ENCODE measurements at regions of chr6 and their contacts with region 1.

Region 1: DNA sequence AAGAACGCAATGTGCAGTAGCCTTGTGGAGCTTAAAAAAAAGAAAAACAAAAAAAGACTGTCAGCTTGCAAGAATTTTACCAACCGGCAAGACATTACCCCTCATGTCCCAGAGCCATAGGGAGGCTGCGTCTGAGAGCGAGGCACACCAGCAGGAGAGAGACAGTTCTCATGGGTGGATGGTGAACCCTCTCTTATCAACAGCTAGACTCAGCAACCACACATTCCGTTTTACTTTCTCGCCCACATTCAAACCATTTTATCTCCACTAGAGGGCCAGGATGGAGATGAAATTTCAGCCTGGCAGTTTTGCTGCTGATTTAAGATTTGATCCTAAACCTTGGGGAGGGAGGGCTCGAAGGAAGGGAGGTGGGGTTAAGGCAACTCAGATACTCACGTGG is 247.0 kb downstream of the ATXN1 start:
- DNase-seq: no peak
- H3K4me3 ChIP-seq: no peak overlapping the region
- H3K27ac ChIP-seq: no peak overlapping the region
- H3K4me1 ChIP-seq: peaks cover 3% of the 10 kb centered on the region
- H3K27me3 ChIP-seq: no peaks in the 10 kb centered on the region
- CTCF ChIP-seq: peak; percentile 18

Region 2: GRCh38 chr6:16319813-16320532 is 194.3 kb before region 1 on chr6:
- intact Hi-C with region 1: loop called (anchors 10 kb)
- DNase-seq: peak; percentile 40
- H3K4me3 ChIP-seq: no peak overlapping the region
- H3K27ac ChIP-seq: peak overlapping the region; percentile 66
- H3K4me1 ChIP-seq: peaks cover 4% of the 10 kb centered on the region
- H3K27me3 ChIP-seq: no peaks in the 10 kb centered on the region
- CTCF ChIP-seq: no peak

Region 3: DNA sequence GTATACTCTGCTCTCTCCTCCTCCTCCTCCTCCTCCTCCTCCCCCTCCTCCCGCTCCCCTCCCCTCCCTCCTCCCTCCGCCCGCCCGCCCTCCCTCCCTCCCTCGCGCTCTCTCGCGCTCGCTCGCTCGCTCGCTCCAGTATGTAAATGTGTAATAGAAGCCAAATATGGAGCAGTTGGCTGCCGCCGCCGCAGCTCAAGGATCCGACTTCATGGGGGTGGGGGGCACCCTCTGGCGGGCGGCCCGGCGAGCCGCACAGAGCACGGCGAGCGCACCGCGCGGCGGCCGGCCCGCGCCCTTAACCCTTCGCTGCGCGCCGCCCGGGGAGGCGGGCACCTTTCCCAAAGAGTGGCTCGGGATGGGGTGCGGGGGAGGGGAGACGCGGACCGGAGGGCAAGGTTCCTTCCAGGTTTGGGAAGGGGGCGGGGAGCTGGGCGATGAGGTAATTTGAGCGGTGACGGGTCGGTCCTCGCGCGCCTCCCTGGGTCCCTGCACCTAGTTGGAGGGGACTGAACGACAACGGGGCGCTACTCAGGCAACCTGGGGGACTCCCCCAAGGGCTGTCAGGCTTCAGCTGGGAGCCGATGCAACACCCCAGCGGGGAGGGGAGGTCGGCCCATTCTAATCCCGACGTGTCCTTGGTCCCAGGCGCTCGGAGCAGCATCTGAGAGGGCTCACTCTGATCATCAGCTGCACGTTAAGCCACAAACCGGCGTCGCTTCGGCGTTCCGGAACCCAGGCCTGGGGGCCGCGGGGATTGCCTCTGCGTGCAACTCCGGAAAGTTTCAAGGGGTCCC is 247.4 kb after region 1 on chr6:
- intact Hi-C with region 1: loop called (anchors 2 kb)
- DNase-seq: peak; percentile 94
- H3K4me3 ChIP-seq: peak overlapping the region; percentile 80
- H3K27ac ChIP-seq: peak overlapping the region; percentile 97
- H3K4me1 ChIP-seq: peaks cover 8% of the 10 kb centered on the region
- H3K27me3 ChIP-seq: no peaks in the 10 kb centered on the region
- CTCF ChIP-seq: no peak